ENCODE measurements at regions of chr1 and their contacts with region 1.

Region 1: DNA sequence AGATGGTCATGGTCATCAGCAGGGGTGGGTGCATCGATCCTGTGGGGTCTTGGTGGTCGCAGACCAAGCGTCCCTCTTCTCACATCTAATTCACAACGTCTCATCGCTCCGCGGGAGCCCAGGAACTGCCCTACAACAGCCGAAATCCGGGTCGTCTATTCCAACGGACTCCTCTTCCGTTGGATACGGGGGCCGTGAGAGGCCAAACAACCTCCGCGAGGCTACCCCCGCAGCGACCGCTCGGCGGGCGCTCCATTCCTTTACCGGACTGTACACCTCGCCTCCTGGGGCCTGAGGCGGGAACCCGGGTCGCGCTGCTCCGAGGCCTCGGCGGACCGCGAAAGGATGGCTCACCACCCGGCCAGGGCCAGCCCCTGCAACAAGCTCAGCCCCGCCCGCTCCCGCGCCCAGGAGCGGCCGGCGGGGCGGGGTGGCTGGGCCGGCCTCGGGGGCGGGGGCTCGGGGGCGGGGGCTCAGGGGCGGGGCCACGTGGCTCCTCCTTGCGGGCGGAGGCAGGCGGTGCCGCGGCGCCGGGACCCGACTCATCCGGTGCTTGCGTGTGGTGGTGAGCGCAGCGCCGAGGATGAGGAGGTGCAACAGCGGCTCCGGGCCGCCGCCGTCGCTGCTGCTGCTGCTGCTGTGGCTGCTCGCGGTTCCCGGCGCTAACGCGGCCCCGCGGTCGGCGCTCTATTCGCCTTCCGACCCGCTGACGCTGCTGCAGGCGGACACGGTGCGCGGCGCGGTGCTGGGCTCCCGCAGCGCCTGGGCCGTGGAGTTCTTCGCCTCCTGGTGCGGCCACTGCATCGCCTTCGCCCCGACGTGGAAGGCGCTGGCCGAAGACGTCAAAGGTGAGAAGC is at the start of gene QSOX1:
- DNase-seq: peak; percentile 77 to 95 (median 88)
- ATAC-seq: peak; percentile 96
- H3K4me3 ChIP-seq: peak within 1 kb of the TSS; percentile 86
- H3K4me3 Mint-ChIP-seq: peak within 1 kb of the TSS; percentile 91
- H3K27ac ChIP-seq: peak within 1 kb of the TSS; percentile 60 to 62
- H3K27ac Mint-ChIP-seq: peak within 1 kb of the TSS; percentile 87
- H3K4me1 ChIP-seq: peaks cover 22% of the 10 kb centered on the region
- H3K4me1 Mint-ChIP-seq: peaks cover 43% of the 10 kb centered on the region
- H3K27me3 ChIP-seq: no peaks in the 10 kb centered on the region
- H3K27me3 Mint-ChIP-seq: no peaks in the 10 kb centered on the region
- CTCF ChIP-seq: no peak
- total RNA-seq, gene QSOX1: 12.8 to 12.9 TPM

Region 2: DNA sequence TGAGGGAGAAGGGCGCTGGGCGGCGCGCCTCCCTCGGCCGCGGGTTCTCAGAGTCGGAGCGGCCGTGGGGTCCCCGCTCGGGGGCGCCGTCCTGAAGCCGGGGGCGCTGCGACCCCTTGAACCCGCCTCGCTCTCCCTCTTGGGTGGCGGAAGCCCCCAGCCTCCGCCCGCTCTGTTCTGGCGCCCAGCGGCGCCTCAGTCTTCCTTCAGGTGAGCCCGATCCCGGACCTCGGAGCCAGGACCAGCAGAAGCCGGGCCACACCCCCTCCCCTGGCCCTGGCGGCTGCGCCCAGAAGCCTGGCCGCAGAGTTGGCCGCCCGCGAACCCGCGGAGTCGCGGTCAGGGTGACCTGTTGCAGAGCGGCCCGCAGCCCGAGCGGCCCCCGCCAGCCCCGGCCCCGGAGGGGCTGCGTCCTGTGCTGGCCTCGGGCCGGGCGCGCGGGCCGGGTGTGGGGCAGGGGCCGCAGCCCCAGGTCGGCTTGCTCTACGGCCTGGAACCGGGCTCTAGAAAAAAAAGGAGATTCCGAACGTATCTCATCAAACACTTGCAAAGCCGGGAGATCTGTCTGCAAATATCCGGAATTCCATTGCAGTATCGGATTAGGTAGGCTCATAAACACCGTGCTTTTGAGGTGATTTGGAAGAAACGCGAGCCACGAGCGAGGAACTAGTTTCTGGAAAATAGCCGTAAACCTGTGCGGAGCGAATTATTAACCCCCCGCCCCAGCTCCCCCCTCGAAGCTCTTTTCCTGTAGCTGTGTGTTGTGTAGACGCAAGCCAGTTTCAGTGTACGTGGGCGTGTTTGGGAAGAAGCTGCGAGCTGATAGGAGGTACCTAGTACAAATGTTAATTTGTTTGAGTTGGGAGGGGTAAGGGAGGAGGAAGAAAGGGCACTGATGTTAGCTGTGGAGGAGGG is 1428.7 kb before region 1 on chr1:
- CTCF ChIA-PET with region 1: no interaction called
- POLR2A ChIA-PET with region 1: no interaction called
- intact Hi-C with region 1: loop called in 1 of 2 experiments (anchors 10 kb)
- DNase-seq: peak in 8 of 9 experiments; percentile 31 to 85 (median 62)
- ATAC-seq: peak; percentile 81
- H3K4me3 ChIP-seq: peak overlapping the region; percentile 67 to 90
- H3K4me3 Mint-ChIP-seq: peak overlapping the region; percentile 85
- H3K27ac ChIP-seq: peak overlapping the region; percentile 58 to 69
- H3K27ac Mint-ChIP-seq: peak overlapping the region; percentile 75
- H3K4me1 ChIP-seq: peaks cover 10% of the 10 kb centered on the region
- H3K4me1 Mint-ChIP-seq: peaks cover 23% of the 10 kb centered on the region
- H3K27me3 ChIP-seq: no peaks in the 10 kb centered on the region
- H3K27me3 Mint-ChIP-seq: peaks cover 3% of the 10 kb centered on the region
- CTCF ChIP-seq: no peak

Region 3: GRCh38 chr1:179816196-179816960 is 338.2 kb before region 1 on chr1:
- CTCF ChIA-PET with region 1: interaction called, 3 read pairs
- POLR2A ChIA-PET with region 1: interaction called, 3 read pairs
- intact Hi-C with region 1: loop called in 1 of 2 experiments (anchors 5 kb)
- DNase-seq: no peak
- ATAC-seq: no peak
- H3K4me3 ChIP-seq: no peak overlapping the region
- H3K4me3 Mint-ChIP-seq: peak overlapping the region; percentile 92
- H3K27ac ChIP-seq: no peak overlapping the region
- H3K27ac Mint-ChIP-seq: no peak overlapping the region
- H3K4me1 ChIP-seq: peaks cover 12% of the 10 kb centered on the region
- H3K4me1 Mint-ChIP-seq: peaks cover 19% of the 10 kb centered on the region
- H3K27me3 ChIP-seq: no peaks in the 10 kb centered on the region
- H3K27me3 Mint-ChIP-seq: no peaks in the 10 kb centered on the region
- CTCF ChIP-seq: no peak

Region 4: DNA sequence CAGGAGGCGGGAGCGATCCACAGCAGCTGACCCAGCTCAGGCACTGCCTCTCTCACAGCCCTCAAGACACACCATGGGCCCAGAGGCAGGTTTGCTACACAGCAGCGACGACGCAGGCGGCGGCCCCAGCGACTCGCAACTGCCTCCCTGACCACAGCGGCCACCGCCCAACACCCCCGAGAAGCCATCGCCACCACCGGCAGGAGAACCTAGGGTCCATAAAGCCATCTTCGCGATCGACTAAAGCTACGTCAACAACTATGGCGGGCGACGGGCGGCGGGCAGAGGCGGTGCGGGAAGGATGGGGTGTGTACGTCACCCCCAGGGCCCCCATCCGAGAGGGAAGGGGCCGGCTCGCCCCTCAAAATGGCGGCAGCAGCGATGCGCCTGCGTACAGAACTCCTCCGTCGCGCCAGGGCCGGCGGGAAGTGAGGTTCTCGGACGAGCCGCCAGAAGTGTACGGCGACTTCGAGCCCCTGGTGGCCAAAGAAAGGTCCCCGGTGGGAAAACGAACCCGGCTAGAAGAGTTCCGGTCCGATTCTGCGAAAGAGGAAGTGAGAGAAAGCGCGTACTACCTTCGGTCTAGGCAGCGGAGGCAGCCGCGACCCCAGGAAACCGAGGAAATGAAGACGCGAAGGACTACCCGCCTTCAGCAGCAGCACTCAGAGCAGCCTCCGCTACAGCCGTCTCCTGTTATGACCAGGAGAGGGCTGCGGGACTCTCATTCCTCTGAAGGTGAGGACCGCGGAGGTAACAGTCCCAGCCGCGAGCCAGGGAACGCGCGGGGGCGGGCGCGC is 272.1 kb before region 1 on chr1 and contains the start of gene TOR1AIP1:
- CTCF ChIA-PET with region 1: no interaction called
- POLR2A ChIA-PET with region 1: interaction called, 9 read pairs
- intact Hi-C with region 1: loop called (anchors 1 to 5 kb)
- DNase-seq: peak; percentile 95 to 99 (median 97)
- ATAC-seq: peak; percentile 74
- H3K4me3 ChIP-seq: peak within 1 kb of the TSS; percentile 91 to 95
- H3K4me3 Mint-ChIP-seq: peak within 1 kb of the TSS; percentile 94
- H3K27ac ChIP-seq: peak within 1 kb of the TSS; percentile 98 to 99
- H3K27ac Mint-ChIP-seq: peak within 1 kb of the TSS; percentile 100
- H3K4me1 ChIP-seq: peaks cover 37% of the 10 kb centered on the region
- H3K4me1 Mint-ChIP-seq: peaks cover 59% of the 10 kb centered on the region
- H3K27me3 ChIP-seq: no peaks in the 10 kb centered on the region
- H3K27me3 Mint-ChIP-seq: no peaks in the 10 kb centered on the region
- CTCF ChIP-seq: peak; percentile 41
- total RNA-seq, gene TOR1AIP1: 108 to 110 TPM

Region 5: GRCh38 chr1:179954493-179955297 is 199.9 kb before region 1 on chr1 and contains the start of gene CEP350:
- CTCF ChIA-PET with region 1: no interaction called
- POLR2A ChIA-PET with region 1: no interaction called
- intact Hi-C with region 1: loop called (anchors 1 to 5 kb)
- DNase-seq: peak; percentile 94 to 100 (median 97)
- ATAC-seq: peak; percentile 86
- H3K4me3 ChIP-seq: peak within 1 kb of the TSS; percentile 69 to 85
- H3K4me3 Mint-ChIP-seq: peak within 1 kb of the TSS; percentile 85
- H3K27ac ChIP-seq: peak within 1 kb of the TSS; percentile 77 to 88
- H3K27ac Mint-ChIP-seq: peak within 1 kb of the TSS; percentile 95
- H3K4me1 ChIP-seq: peaks cover 35% of the 10 kb centered on the region
- H3K4me1 Mint-ChIP-seq: peaks cover 59% of the 10 kb centered on the region
- H3K27me3 ChIP-seq: no peaks in the 10 kb centered on the region
- H3K27me3 Mint-ChIP-seq: no peaks in the 10 kb centered on the region
- CTCF ChIP-seq: no peak
- total RNA-seq, gene CEP350: 37.6 to 42.7 TPM

Region 6: GRCh38 chr1:180168786-180169639 is 14.5 kb after region 1 on chr1:
- CTCF ChIA-PET with region 1: interaction called, 14 read pairs
- POLR2A ChIA-PET with region 1: interaction called, 3 read pairs
- intact Hi-C with region 1: loop called in 1 of 2 experiments (anchors 2 kb)
- DNase-seq: peak in 3 of 9 experiments; percentile 24 to 46 (median 37)
- ATAC-seq: peak; percentile 59
- H3K4me3 ChIP-seq: no peak overlapping the region
- H3K4me3 Mint-ChIP-seq: no peak overlapping the region
- H3K27ac ChIP-seq: no peak overlapping the region
- H3K27ac Mint-ChIP-seq: no peak overlapping the region
- H3K4me1 ChIP-seq: no peaks in the 10 kb centered on the region
- H3K4me1 Mint-ChIP-seq: peaks cover 4% of the 10 kb centered on the region
- H3K27me3 ChIP-seq: no peaks in the 10 kb centered on the region
- H3K27me3 Mint-ChIP-seq: no peaks in the 10 kb centered on the region
- CTCF ChIP-seq: peak; percentile 17

Measured in CD8-positive, alpha-beta T cell (primary cell).